PC-3 (cell line): ENCODE measurements at regions of chr6 and their contacts with region 1.

Region 1: DNA sequence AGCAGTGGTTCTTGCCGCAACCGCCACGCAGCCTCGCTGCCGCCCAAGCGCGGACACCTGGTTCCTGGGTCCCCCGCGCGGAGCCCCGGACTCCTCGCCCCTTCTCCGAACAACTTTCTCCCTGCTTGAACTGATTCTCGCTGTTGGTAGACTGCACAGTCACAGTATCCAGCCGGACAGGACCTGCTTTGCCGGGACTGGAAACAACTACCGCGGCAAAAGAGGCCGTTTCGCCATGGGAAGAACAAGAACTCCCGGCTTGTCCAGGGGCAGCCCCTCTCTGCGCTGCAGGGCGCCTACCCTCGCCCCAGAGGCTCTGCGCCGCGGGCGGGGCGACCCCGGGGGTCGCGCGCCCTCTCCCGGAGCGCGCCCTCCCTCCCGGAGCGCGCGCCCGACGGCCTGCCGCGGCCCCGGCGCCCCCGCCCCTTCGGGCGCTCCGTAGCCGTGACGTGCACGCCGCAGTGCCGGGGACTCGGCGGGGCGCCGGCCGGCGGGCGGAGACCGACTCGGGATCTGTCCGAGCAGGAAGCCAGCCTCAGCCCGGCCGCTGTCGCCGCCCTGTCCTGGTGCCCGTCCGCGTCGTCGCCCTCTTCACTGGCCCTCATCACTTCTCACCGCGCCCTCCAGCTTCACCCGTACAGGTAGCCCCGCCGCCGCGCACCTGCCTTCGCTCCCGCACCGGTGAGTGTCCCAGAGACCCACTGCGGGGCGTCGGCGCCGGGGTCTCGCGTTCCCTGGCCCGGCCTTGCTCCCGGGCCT is at the start of gene MYO6:
- DNase-seq: peak; percentile 68
- ATAC-seq: peak; percentile 76
- H3K4me3 ChIP-seq: peak within 1 kb of the TSS; percentile 98
- H3K27ac ChIP-seq: peak within 1 kb of the TSS; percentile 88
- H3K4me1 ChIP-seq: peaks cover 30% of the 10 kb centered on the region
- H3K27me3 ChIP-seq: no peaks in the 10 kb centered on the region
- CTCF ChIP-seq: no peak
- total RNA-seq, gene MYO6: 10.2 and 13.8 TPM in 2 replicates

Region 2: GRCh38 chr6:75735491-75736186 is 13.3 kb before region 1 on chr6:
- CTCF ChIA-PET with region 1: no interaction called
- POLR2A ChIA-PET with region 1: interaction called, 10 read pairs
- intact Hi-C with region 1: no loop called
- DNase-seq: peak; percentile 41
- ATAC-seq: peak; percentile 73
- H3K4me3 ChIP-seq: no peak overlapping the region
- H3K27ac ChIP-seq: peak overlapping the region; percentile 62
- H3K4me1 ChIP-seq: peaks cover 10% of the 10 kb centered on the region; the same call in 1 of the 2 replicates
- H3K27me3 ChIP-seq: no peaks in the 10 kb centered on the region
- CTCF ChIP-seq: no peak

Region 3: GRCh38 chr6:75849701-75850563 is 101.0 kb after region 1 on chr6:
- CTCF ChIA-PET with region 1: no interaction called
- POLR2A ChIA-PET with region 1: interaction called, 5 read pairs
- intact Hi-C with region 1: loop called (anchors 2 kb)
- DNase-seq: peak; percentile 81
- ATAC-seq: peak; percentile 59
- H3K4me3 ChIP-seq: peak overlapping the region; percentile 52
- H3K27ac ChIP-seq: peak overlapping the region; percentile 91
- H3K4me1 ChIP-seq: peaks cover 57% of the 10 kb centered on the region
- H3K27me3 ChIP-seq: no peaks in the 10 kb centered on the region
- CTCF ChIP-seq: no peak